GM12878 (cell line): ENCODE measurements at regions of chr2 and their contacts with region 1.

Region 1: DNA sequence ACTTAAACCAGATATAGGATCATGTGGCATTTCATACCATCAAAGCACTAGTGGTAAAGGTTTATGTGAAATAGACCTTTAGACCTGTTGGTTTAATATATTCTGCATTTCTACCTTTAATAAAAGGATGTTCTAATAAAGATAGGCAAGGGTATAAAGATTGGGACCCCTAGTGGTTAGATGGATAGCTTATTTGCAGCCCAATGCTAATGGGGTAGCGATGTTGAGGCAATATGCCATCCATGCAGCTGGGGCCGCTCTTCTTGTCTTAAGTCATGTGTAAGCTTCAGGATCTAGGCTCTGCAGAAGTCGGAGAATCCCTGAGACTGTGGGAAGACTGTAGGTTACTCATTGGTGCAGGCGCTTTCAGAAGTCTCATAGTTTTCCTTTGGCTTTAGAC is 114.9 kb downstream of the ICOS start:
- DNase-seq: no peak
- ATAC-seq: peak; percentile 70
- H3K4me3 ChIP-seq: no peak overlapping the region
- H3K27ac ChIP-seq: no peak overlapping the region
- H3K4me1 ChIP-seq: no peaks in the 10 kb centered on the region
- H3K27me3 ChIP-seq: peaks cover 0 to 6% of the 10 kb centered on the region in 2 experiments; a peak in 1 of 4 replicates
- CTCF ChIP-seq: peak in 1 of 3 experiments; percentile 29; a peak in 3 of 6 replicates
- EP300 ChIP-seq: no peak
- POLR2A ChIP-seq: no peak
- RAD21 ChIP-seq: no peak

Region 2: DNA sequence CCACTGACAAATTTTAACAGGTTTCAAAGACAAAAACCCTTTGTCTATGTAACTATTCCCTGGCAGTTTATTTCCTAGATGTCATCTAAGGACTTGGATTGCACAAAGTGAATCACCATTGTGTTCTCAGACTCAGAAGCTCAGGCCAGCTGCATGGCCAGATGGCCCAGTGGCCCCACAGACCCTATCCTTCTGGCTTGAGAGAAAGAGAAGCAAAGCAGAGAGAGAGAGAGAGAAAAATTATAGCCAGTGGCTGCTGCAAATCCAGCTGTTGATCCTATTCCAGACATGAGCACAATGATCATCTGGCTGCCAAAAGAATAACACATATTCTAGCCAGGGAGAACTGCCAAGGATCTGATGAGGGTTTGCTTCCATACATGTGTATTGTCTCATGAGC is 158.1 kb before region 1 on chr2:
- CTCF ChIA-PET with region 1: no interaction called
- POLR2A ChIA-PET with region 1: no interaction called
- RAD21 ChIA-PET with region 1: no interaction called
- SMC1A ChIA-PET with region 1: no interaction called
- in situ Hi-C with region 1: no loop called
- intact Hi-C with region 1: no loop called
- DNase-seq: no peak
- ATAC-seq: no peak
- H3K4me3 ChIP-seq: no peak overlapping the region
- H3K27ac ChIP-seq: no peak overlapping the region
- H3K4me1 ChIP-seq: no peaks in the 10 kb centered on the region
- H3K27me3 ChIP-seq: no peaks in the 10 kb centered on the region; a peak in 1 of 4 replicates
- CTCF ChIP-seq: no peak
- EP300 ChIP-seq: no peak
- POLR2A ChIP-seq: no peak
- RAD21 ChIP-seq: no peak

Region 3: GRCh38 chr2:203928849-203929248 is 122.6 kb before region 1 on chr2:
- CTCF ChIA-PET with region 1: no interaction called
- POLR2A ChIA-PET with region 1: no interaction called
- RAD21 ChIA-PET with region 1: no interaction called
- SMC1A ChIA-PET with region 1: no interaction called
- in situ Hi-C with region 1: no loop called
- intact Hi-C with region 1: loop called (anchors 2 kb)
- DNase-seq: no peak
- ATAC-seq: no peak; the same call in 2 of the 3 replicates
- H3K4me3 ChIP-seq: no peak overlapping the region
- H3K27ac ChIP-seq: no peak overlapping the region
- H3K4me1 ChIP-seq: no peaks in the 10 kb centered on the region
- H3K27me3 ChIP-seq: no peaks in the 10 kb centered on the region
- CTCF ChIP-seq: peak in 2 of 3 experiments; percentile 14 to 21; a peak in 3 of 6 replicates
- EP300 ChIP-seq: no peak
- POLR2A ChIP-seq: no peak
- RAD21 ChIP-seq: peak; percentile 32; the same call in 1 of the 2 replicates